Heart right ventricle (tissue), 16 donors: ENCODE measurements at regions of chr10 and their contacts with region 1.

Region 1: DNA sequence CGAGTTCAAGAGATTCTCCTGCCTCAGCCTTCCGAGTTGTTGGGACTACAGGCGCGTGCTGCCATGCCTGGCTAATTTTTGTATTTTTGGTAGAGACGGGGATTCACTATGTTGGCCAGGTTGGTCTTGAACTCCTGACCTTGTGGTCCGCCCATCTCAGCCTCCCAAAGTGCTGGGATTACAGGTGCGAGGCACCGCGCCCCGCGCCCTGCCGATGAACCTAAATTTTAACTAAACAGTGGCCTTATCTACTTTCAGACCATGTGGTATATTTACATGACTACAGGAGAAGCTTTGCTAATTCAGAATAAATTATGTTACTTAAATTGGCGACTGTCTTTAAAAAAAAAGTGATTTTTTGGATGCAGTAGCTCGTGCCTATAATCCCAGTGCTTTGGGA is 9.2 kb downstream of the SIRT1 start:
- DNase-seq: no peak
- ATAC-seq: no peak
- H3K4me3 ChIP-seq: no peak overlapping the region
- H3K27ac ChIP-seq: no peak overlapping the region
- H3K4me1 ChIP-seq: peaks cover 0 to 8% (median 0%) of the 10 kb centered on the region in 9 donors
- H3K27me3 ChIP-seq: no peaks in the 10 kb centered on the region
- CTCF ChIP-seq: no peak

Region 2: DNA sequence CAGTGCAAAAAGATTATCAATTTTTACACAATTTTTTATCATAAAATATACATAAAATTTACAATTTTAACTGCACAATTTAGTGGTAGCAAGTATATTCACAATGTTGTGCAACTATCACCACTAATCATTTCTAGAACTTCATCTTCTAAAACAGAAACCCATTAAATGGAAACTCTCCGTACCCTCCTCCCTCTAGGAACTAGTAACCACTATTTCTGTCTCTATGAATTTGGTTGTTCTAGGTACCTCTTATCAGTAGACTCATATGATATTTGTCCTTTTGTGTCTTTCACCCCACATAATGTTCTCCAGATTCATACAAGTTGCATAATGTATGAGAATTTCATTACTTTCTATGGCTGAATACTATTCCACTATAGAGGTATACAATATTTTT is 107.9 kb after region 1 on chr10:
- intact Hi-C with region 1: no loop called
- DNase-seq: no peak
- ATAC-seq: no peak
- H3K4me3 ChIP-seq: no peak overlapping the region
- H3K27ac ChIP-seq: no peak overlapping the region
- H3K4me1 ChIP-seq: no peaks in the 10 kb centered on the region
- H3K27me3 ChIP-seq: no peaks in the 10 kb centered on the region
- CTCF ChIP-seq: no peak

Region 3: DNA sequence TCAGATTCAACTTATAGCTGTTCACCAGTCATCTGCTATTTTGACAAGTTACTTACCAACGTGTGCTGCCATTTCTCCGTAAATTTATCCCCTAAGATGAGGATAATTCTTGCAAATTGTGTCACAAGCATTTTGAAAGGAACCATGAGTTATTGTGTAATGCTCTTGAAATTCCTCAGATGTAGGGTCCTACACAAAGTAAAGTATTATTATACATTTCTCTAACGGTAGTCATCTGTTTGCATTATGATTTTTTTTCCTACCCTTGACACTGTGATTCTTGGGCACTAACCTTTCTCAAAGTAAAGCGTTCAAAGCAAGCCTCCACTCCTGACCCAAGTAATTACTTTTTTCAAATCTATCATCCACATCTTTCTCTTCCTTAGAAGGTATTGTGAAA is 173.4 kb after region 1 on chr10:
- intact Hi-C with region 1: loop called in 3 of 10 experiments (anchors 5 to 10 kb)
- DNase-seq: no peak
- ATAC-seq: no peak
- H3K4me3 ChIP-seq: no peak overlapping the region
- H3K27ac ChIP-seq: no peak overlapping the region
- H3K4me1 ChIP-seq: peaks cover 0 to 25% (median 14%) of the 10 kb centered on the region in 9 donors
- H3K27me3 ChIP-seq: no peaks in the 10 kb centered on the region
- CTCF ChIP-seq: no peak